K562 (cell line): ENCODE measurements at regions of chr11 and their contacts with region 1.

Region 1: DNA sequence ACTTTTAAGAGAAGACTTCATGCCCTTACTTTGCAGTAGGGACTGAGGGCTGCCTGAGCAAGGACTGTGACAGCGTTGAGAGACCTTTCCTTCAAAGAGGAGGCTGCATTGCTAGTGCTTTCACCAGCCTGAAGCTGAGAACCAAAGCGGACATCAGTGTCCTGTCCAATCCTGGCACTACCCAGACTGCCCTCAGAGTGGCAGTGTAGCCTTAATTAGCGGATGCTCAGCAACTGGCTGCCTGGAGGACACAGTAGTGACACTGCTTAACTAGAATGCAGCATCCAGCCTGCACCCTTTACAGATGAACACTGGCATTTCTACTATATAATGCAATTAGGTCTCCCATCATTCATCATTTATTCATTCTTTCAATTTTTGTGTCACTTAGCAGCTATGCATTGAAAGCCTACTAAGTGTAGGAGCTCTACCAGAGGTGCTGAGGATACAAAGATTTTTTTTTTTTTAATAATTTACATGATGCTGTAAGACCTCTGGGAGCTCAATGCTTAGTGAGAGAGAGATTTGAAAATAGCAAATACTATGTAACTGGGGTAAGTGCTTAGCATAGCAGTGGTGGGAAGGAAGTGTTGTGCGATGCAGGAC is 36.9 kb upstream of the SLC36A4 start:
- DNase-seq: peak; percentile 51 to 73 (median 52)
- ATAC-seq: peak; percentile 98
- H3K4me3 ChIP-seq: no peak overlapping the region
- H3K27ac ChIP-seq: no peak overlapping the region
- H3K4me1 ChIP-seq: no peaks in the 10 kb centered on the region
- H3K27me3 ChIP-seq: no peaks in the 10 kb centered on the region; a peak in 1 of 5 replicates
- CTCF ChIP-seq: peak; percentile 84 to 92 (median 87)
- EP300 ChIP-seq: no peak
- POLR2A ChIP-seq: no peak
- RAD21 ChIP-seq: peak; percentile 97

Region 2: DNA sequence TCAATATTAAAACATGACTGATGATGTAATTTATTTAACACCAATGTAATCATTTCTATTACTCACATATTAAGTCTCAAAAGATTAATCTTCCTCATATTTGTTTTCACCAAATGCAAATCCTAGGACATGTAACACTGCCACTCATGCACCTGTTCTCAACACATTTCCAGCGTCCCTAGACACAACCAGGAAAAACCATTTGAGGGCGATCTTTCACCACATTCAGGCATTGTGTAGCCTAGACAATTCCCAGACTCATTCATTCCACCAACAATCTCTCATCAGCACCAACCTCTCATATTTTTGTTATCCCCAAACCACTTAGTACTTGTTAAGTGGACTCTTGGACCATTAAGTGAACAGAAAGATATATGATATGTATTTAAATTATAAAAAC is 103.0 kb before region 1 on chr11:
- CTCF ChIA-PET with region 1: no interaction called
- POLR2A ChIA-PET with region 1: no interaction called
- in situ Hi-C with region 1: no loop called
- intact Hi-C with region 1: loop called (anchors 5 kb)
- DNase-seq: peak in 1 of 4 experiments; percentile 11
- ATAC-seq: peak; percentile 63; the same call in 2 of the 3 replicates
- H3K4me3 ChIP-seq: no peak overlapping the region
- H3K27ac ChIP-seq: no peak overlapping the region
- H3K4me1 ChIP-seq: no peaks in the 10 kb centered on the region
- H3K27me3 ChIP-seq: no peaks in the 10 kb centered on the region
- CTCF ChIP-seq: peak; percentile 18 to 50 (median 18); a peak in 2 of 6 replicates
- EP300 ChIP-seq: no peak
- POLR2A ChIP-seq: no peak
- RAD21 ChIP-seq: peak; percentile 13 to 67; a peak in 2 of 4 replicates

Region 3: GRCh38 chr11:93370260-93370659 is 135.6 kb after region 1 on chr11:
- CTCF ChIA-PET with region 1: no interaction called
- POLR2A ChIA-PET with region 1: no interaction called
- in situ Hi-C with region 1: no loop called
- intact Hi-C with region 1: no loop called
- DNase-seq: no peak
- ATAC-seq: no peak
- H3K4me3 ChIP-seq: no peak overlapping the region
- H3K27ac ChIP-seq: no peak overlapping the region
- H3K4me1 ChIP-seq: no peaks in the 10 kb centered on the region; a peak in 1 of 5 replicates
- H3K27me3 ChIP-seq: no peaks in the 10 kb centered on the region
- CTCF ChIP-seq: no peak
- EP300 ChIP-seq: no peak
- POLR2A ChIP-seq: no peak
- RAD21 ChIP-seq: no peak

Region 4: GRCh38 chr11:93458286-93458685 is 223.6 kb after region 1 on chr11:
- CTCF ChIA-PET with region 1: no interaction called
- POLR2A ChIA-PET with region 1: no interaction called
- in situ Hi-C with region 1: no loop called
- intact Hi-C with region 1: loop called (anchors 10 kb)
- DNase-seq: no peak
- ATAC-seq: no peak
- H3K4me3 ChIP-seq: no peak overlapping the region
- H3K27ac ChIP-seq: no peak overlapping the region
- H3K4me1 ChIP-seq: no peaks in the 10 kb centered on the region
- H3K27me3 ChIP-seq: peaks cover 0 to 5% of the 10 kb centered on the region in 2 experiments; a peak in 1 of 5 replicates
- CTCF ChIP-seq: no peak
- EP300 ChIP-seq: no peak
- POLR2A ChIP-seq: no peak
- RAD21 ChIP-seq: no peak

Region 5: DNA sequence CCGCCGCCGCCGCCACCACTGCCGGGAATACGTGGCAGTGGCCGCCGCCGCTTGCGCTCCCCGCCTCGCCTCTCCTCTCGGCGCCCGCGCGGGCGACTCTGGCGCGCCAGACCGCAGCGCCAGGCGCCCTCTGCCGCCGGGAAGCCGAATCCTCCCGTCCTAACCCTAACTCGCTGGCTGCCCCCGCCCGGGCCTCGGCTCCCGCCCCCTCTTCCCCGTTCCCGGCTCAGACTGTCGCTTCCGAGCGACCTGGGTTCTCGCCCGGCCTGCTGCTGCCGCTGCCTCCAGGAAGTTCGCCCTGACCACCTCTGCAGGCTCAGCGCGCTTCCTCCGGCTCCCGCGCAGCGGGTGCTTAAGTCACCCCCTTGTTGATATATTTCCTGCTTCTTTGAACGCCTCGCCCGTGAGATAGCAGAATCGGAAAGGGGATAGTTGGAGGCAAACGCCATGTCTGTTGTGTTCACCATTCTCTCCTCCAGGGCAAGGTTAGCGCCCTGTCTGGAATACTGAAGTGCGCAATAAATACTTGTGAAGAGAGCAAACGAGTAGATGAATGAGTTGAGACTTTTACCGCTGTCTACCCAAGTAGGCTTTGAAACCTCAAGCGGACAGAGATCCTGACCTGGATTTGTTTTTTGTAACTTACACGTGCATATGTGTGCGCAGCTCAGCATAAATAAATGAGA is 308.7 kb after region 1 on chr11 and contains the start of gene SMCO4:
- CTCF ChIA-PET with region 1: interaction called, 11 read pairs
- POLR2A ChIA-PET with region 1: no interaction called
- in situ Hi-C with region 1: no loop called
- intact Hi-C with region 1: loop called (anchors 1 kb)
- DNase-seq: peak; percentile 85 to 90 (median 87)
- ATAC-seq: peak; percentile 94
- H3K4me3 ChIP-seq: peak within 1 kb of the TSS; percentile 72
- H3K27ac ChIP-seq: peak within 1 kb of the TSS; percentile 38
- H3K4me1 ChIP-seq: peaks cover 13 to 14% of the 10 kb centered on the region in 2 experiments
- H3K27me3 ChIP-seq: no peaks in the 10 kb centered on the region; a peak in 1 of 5 replicates
- CTCF ChIP-seq: peak; percentile 60 to 87 (median 86)
- EP300 ChIP-seq: 0 out of 2 replicates have a peak, but pooled peaks have one; percentile 20
- POLR2A ChIP-seq: peak; percentile 56
- RAD21 ChIP-seq: peak; percentile 82 to 83
- polyA plus RNA-seq, gene SMCO4: 1.8 to 2.2 TPM

Region 6: DNA sequence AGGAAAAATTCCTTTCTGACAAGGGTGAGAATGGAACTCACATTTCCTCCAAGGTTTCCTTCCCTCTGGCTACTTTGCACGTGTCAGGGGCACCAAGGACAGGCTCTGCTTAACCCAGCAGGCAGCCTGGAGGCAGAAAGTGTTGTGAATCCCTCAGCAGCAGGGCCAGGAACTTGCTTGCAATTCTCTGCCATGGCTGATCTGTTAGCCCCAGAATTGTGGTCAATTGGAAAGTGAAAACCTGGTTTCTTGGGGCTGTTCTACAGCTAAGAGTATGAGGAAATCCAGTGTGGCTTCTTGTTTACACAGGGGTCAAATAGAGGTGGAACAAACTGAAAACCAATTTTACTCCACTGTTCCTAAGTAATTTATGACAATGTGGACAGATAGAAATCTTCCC is 388.5 kb after region 1 on chr11:
- CTCF ChIA-PET with region 1: interaction called, 4 read pairs
- POLR2A ChIA-PET with region 1: no interaction called
- in situ Hi-C with region 1: no loop called
- intact Hi-C with region 1: loop called (anchors 1 kb)
- DNase-seq: no peak
- ATAC-seq: no peak
- H3K4me3 ChIP-seq: no peak overlapping the region
- H3K27ac ChIP-seq: no peak overlapping the region
- H3K4me1 ChIP-seq: 0 out of 5 replicates have a peak, but pooled peaks cover 0 to 3% of the 10 kb centered on the region in 2 experiments
- H3K27me3 ChIP-seq: peaks cover 0 to 4% of the 10 kb centered on the region in 2 experiments; a peak in 2 of 5 replicates
- CTCF ChIP-seq: no peak
- EP300 ChIP-seq: no peak
- POLR2A ChIP-seq: no peak
- RAD21 ChIP-seq: no peak

Region 7: GRCh38 chr11:93652161-93652597 is 417.5 kb after region 1 on chr11:
- CTCF ChIA-PET with region 1: interaction called, 5 read pairs
- POLR2A ChIA-PET with region 1: no interaction called
- in situ Hi-C with region 1: loop called (anchors 10 kb)
- intact Hi-C with region 1: loop called (anchors 2 kb)
- DNase-seq: peak; percentile 18 to 55 (median 31)
- ATAC-seq: peak; percentile 58; the same call in 2 of the 3 replicates
- H3K4me3 ChIP-seq: no peak overlapping the region
- H3K27ac ChIP-seq: no peak overlapping the region
- H3K4me1 ChIP-seq: no peaks in the 10 kb centered on the region
- H3K27me3 ChIP-seq: no peaks in the 10 kb centered on the region; a peak in 1 of 5 replicates
- CTCF ChIP-seq: peak; percentile 41 to 73 (median 61); a peak in 5 of 6 replicates
- EP300 ChIP-seq: no peak
- POLR2A ChIP-seq: no peak
- RAD21 ChIP-seq: peak; percentile 41 to 58; a peak in 3 of 4 replicates